ENCODE measurements at regions of chr17 and their contacts with region 1.

Region 1: GRCh38 chr17:32253117-32253611 is 12.5 kb upstream of the RHBDL3 start:
- DNase-seq: peak; percentile 66 to 95 (median 86)

Region 2: DNA sequence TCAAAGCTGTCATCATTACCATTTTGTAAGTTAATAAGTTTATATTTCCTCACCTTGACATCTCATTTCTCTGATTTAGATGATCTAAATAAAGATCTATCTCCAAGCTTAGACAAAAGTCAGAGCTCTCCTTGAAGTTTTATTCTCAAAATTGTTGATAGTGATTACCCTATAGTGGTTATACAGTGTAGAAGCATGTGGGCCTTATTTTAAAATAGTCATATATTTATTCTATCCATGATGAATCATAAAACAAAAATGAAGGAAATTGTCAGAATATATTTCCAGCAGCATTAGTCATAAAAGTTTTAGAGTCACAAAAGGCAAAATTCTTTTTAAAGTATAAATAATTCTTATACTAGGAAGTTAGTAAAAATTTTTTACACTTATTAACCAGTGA is 61.9 kb before region 1 on chr17:
- intact Hi-C with region 1: no loop called
- DNase-seq: no peak

Region 3: GRCh38 chr17:32319548-32319905 is 66.4 kb after region 1 on chr17:
- intact Hi-C with region 1: loop called (anchors 2 kb)
- DNase-seq: peak; percentile 30 to 93 (median 82)

Region 4: GRCh38 chr17:32356750-32357149 is 103.6 kb after region 1 on chr17:
- intact Hi-C with region 1: no loop called
- DNase-seq: no peak

Region 5: DNA sequence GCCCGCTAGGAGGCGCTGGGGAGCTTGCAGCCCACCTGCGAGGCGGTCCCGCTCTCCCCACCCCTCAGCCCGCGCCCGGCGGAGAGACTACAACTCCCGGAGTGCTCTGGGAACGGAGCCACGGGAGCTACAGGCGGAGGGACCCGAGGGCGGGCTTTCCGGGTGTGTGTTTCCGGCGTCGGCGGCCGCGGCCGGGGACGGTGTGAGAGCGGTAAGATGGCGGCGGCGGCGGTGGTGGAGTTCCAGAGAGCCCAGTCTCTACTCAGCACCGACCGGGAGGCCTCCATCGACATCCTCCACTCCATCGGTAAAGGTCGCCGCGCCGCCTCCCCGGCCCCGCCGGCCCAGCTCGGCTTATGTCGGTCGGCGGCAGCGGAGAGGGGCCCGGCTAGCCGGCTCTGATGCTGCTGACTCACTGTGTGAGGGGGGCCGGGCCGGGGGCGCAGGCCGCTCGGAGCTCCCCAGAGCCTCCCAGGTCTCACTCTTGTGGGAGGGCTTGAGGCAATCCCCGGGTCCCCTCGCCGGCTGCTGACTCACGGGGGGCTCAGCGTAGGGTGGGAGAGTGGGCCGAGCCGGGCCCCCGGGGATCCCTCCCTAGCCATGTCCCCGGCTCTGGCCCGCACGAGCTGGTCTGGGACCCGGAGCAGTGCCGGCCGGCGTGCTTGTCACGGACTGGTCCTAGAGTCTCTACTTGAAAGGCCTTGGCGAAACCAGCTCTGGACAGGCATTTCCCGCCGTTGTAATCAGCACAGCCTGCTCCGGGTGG is 191.3 kb after region 1 on chr17 and contains the start of gene PSMD11:
- intact Hi-C with region 1: loop called (anchors 10 kb)
- DNase-seq: peak; percentile 93 to 99 (median 98)

Region 6: DNA sequence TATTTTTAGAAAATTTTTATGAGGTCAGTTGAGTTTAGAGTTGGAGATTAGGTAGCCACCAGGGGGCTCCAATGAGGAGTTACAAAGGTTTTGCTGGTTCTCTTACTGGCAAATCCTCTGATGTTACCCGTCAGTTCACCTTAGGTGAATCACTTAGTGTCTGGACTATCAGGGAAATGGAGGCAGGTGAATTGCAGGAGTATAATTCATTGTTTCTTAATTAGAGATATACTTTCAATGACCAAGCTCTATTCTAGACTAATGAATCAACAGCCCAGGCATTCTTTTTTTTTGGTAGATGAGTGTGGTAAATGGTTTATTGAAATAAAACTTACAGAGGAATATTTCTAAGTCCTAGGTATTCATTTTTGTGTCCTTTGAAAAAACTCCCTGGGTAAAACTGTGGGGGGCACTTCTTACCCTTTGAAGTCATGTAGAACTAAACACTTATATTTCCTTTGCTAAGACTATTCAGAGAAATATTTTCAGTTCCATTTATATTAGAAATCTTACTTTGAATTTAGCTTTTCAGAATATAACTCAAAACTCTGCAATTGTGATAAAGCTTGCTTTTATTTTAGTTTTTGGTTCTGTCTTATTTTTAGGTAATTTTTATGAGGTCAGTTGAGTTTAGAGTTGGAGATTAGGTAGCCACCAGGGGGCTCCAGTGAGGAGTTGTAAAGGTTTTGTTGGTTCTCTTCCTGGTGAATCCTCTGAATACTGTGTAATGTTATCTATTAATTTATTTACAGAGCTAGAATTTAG is 208.9 kb after region 1 on chr17:
- intact Hi-C with region 1: no loop called
- DNase-seq: peak in 32 of 42 donors; percentile 25 to 84 (median 60)